IMR-90 (cell line): ENCODE measurements at regions of chr11 and their contacts with region 1.

Region 1: GRCh38 chr11:122179961-122180834 is 64.2 kb upstream of the BLID start:
- DNase-seq: peak; percentile 98
- ATAC-seq: peak; percentile 86
- H3K4me3 ChIP-seq: peak overlapping the region; percentile 61
- H3K27ac ChIP-seq: peak overlapping the region; percentile 93
- H3K4me1 ChIP-seq: peaks cover 15% of the 10 kb centered on the region
- H3K27me3 ChIP-seq: no peaks in the 10 kb centered on the region
- CTCF ChIP-seq: no peak
- POLR2A ChIP-seq: peak; percentile 77; the same call in 1 of the 2 replicates
- RAD21 ChIP-seq: no peak

Region 2: GRCh38 chr11:122167100-122167499 is 13.1 kb before region 1 on chr11:
- CTCF ChIA-PET with region 1: no interaction called
- POLR2A ChIA-PET with region 1: interaction called, 18 read pairs
- dilution Hi-C with region 1: no loop called
- in situ Hi-C with region 1: no loop called
- intact Hi-C with region 1: no loop called
- DNase-seq: peak; percentile 85
- ATAC-seq: peak; percentile 10
- H3K4me3 ChIP-seq: no peak overlapping the region
- H3K27ac ChIP-seq: peak overlapping the region; percentile 48; the same call in 1 of the 2 replicates
- H3K4me1 ChIP-seq: peaks cover 35% of the 10 kb centered on the region
- H3K27me3 ChIP-seq: no peaks in the 10 kb centered on the region
- CTCF ChIP-seq: no peak
- POLR2A ChIP-seq: no peak
- RAD21 ChIP-seq: no peak